PC-9 (cell line): ENCODE measurements at regions of chr3 and their contacts with region 1.

Region 1: GRCh38 chr3:114650808-114651207 is 357.0 kb downstream of the TIGIT start:
- DNase-seq: peak in 1 of 2 experiments; percentile 47
- H3K4me3 ChIP-seq: no peak overlapping the region
- H3K27ac ChIP-seq: peak overlapping the region; percentile 71
- H3K4me1 ChIP-seq: peaks cover 25% of the 10 kb centered on the region
- H3K27me3 ChIP-seq: no peaks in the 10 kb centered on the region
- CTCF ChIP-seq: no peak

Region 2: GRCh38 chr3:114756506-114757279 is 105.9 kb after region 1 on chr3:
- CTCF ChIA-PET with region 1: no interaction called
- POLR2A ChIA-PET with region 1: no interaction called
- intact Hi-C with region 1: loop called (anchors 5 kb)
- DNase-seq: no peak
- H3K4me3 ChIP-seq: no peak overlapping the region
- H3K27ac ChIP-seq: no peak overlapping the region
- H3K4me1 ChIP-seq: no peaks in the 10 kb centered on the region
- H3K27me3 ChIP-seq: no peaks in the 10 kb centered on the region
- CTCF ChIP-seq: no peak

Region 3: DNA sequence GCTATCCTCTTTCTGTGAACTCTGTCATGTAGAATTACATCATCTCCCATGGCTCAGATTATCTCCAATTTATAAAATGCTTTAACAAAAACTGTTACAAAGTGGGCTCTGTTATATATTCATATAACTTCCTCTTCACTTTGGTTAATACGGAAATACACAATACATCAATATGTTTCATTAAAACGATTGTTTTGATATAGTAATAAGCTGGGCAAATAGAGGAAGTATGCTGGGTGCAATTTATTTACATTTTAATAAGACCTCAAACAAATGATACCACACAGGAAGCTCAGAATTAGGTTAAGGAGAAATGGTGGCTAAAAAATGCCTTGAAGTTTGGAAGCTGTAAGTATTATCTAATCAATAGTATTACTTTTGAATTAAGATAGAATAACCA is 165.2 kb after region 1 on chr3:
- CTCF ChIA-PET with region 1: no interaction called
- POLR2A ChIA-PET with region 1: no interaction called
- intact Hi-C with region 1: no loop called
- DNase-seq: no peak
- H3K4me3 ChIP-seq: no peak overlapping the region
- H3K27ac ChIP-seq: no peak overlapping the region
- H3K4me1 ChIP-seq: no peaks in the 10 kb centered on the region
- H3K27me3 ChIP-seq: no peaks in the 10 kb centered on the region
- CTCF ChIP-seq: no peak

Region 4: GRCh38 chr3:116211901-116212300 is 1561.1 kb after region 1 on chr3:
- CTCF ChIA-PET with region 1: interaction called, 12 read pairs
- POLR2A ChIA-PET with region 1: no interaction called
- intact Hi-C with region 1: no loop called
- DNase-seq: no peak
- H3K4me3 ChIP-seq: no peak overlapping the region
- H3K27ac ChIP-seq: no peak overlapping the region
- H3K4me1 ChIP-seq: no peaks in the 10 kb centered on the region
- H3K27me3 ChIP-seq: no peaks in the 10 kb centered on the region
- CTCF ChIP-seq: no peak